ENCODE measurements at regions of chr6 and their contacts with region 1.

Region 1: DNA sequence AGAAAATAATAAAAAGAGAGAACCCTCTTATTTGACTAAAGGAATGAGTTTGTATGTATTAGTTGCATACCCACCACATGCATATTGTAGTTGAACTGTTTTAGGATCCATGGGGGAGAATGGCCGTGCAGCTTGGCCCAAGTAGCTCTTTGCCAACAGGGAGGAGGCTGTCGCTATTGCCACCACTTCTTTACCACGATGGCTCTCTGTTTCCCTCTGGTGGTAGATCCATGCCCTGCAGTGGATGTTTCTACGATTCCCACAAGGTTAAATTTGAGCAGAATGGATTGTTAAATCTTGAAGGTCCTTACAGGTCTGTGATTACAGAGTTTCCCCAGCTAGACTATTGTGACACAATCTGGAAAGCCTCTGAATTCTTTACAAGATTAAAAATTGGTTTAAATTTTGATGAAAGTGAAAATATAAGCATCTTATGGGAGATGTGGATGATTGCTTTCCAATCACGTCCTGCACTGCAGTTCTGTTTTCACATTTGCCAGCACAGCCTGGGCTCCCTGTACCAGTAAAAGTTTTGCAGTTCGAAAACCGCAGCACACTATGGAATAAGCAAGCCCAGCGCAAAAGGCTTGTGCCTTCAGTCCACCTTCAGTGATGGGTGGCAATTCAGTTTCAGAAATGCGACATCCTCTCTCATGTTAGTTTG is 34.4 kb upstream of the FNDC1 start:
- DNase-seq: no peak
- H3K4me3 ChIP-seq: no peak overlapping the region
- H3K27ac ChIP-seq: no peak overlapping the region
- H3K27me3 ChIP-seq: peaks cover 14% of the 10 kb centered on the region
- CTCF ChIP-seq: peak; percentile 97

Region 2: GRCh38 chr6:159008656-159009288 is 126.1 kb before region 1 on chr6:
- CTCF ChIA-PET with region 1: interaction called, 54 read pairs
- POLR2A ChIA-PET with region 1: no interaction called
- DNase-seq: no peak
- H3K4me3 ChIP-seq: no peak overlapping the region
- H3K27ac ChIP-seq: no peak overlapping the region
- H3K27me3 ChIP-seq: no peaks in the 10 kb centered on the region
- CTCF ChIP-seq: peak; percentile 38

Region 3: DNA sequence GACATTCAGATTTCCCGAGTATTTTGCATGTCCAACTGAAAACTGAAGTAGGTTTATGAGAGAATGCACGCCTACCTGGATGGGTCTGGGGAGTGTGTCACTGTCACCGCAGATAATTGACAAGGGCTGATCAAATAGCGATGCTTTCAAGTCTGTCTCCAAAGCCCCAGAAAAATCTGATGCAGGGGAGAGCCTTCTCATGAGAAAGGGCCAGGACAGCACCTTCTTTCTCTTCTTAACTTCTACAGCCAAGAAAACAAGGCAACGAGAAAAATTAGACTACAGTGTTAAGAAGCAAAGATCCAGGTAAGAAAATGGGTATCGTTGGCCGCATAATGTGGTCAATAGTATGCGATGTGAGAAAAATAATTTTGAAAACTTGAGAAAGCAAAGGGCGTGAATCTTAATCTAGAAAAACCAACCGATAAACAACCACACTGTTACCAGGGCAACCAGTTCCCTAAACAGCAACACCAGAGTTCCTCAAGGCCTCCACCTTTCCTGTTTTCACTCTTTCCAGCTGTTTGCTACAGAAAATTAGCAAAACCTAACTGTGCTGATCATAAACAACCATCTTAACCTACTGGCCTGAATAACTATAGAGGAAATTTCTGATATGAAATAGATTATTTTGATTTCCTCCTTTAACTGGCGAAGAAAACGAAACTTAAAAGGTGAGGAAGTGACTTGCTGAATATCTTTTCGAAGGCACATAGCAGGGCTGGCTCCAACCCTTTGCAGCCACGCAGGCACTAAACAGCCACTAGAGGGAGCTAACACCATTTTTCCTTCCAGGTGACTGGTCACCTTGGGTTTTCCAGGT is 92.6 kb before region 1 on chr6:
- CTCF ChIA-PET with region 1: interaction called, 19 read pairs
- POLR2A ChIA-PET with region 1: no interaction called
- DNase-seq: peak; percentile 11
- H3K4me3 ChIP-seq: no peak overlapping the region
- H3K27ac ChIP-seq: no peak overlapping the region
- H3K27me3 ChIP-seq: peaks cover 14% of the 10 kb centered on the region
- CTCF ChIP-seq: peak; percentile 89

Region 4: DNA sequence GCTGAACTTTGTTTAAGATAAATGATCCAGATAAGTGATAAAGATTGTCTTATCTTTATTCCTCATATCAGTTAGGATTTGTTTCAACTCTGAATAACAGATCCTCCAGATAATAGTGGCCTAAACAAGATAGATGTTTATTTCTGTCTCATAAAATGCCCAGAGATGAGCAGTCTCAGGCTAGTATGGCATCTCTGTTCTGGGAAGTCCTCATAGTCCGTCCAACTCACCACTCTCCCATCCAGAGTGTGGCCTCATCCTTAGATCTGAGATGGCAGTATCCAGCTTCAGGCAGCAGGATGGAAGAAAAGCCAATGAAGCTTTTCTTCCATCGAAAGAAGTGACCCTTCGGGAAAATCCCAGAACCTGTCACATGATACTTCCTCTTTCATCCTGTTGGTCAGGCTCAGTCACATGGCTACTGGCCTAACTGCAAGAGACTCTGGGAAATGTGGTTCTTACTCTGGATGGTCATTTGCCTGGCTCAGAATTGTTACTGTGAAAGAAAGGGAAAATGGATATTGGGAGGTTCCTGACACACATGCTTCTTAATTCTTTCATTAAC is 60.6 kb before region 1 on chr6:
- CTCF ChIA-PET with region 1: no interaction called
- POLR2A ChIA-PET with region 1: no interaction called
- DNase-seq: no peak
- H3K4me3 ChIP-seq: peak overlapping the region; percentile 35
- H3K27ac ChIP-seq: no peak overlapping the region
- H3K27me3 ChIP-seq: peaks cover 5% of the 10 kb centered on the region
- CTCF ChIP-seq: no peak

Region 5: GRCh38 chr6:159151266-159151855 is 16.5 kb after region 1 on chr6:
- CTCF ChIA-PET with region 1: interaction called, 13 read pairs
- POLR2A ChIA-PET with region 1: no interaction called
- DNase-seq: peak; percentile 21
- H3K4me3 ChIP-seq: no peak overlapping the region
- H3K27ac ChIP-seq: no peak overlapping the region
- H3K27me3 ChIP-seq: no peaks in the 10 kb centered on the region
- CTCF ChIP-seq: peak; percentile 80

Measured in AG04450 (cell line).